ENCODE measurements at regions of chr11 and their contacts with region 1.

Region 1: DNA sequence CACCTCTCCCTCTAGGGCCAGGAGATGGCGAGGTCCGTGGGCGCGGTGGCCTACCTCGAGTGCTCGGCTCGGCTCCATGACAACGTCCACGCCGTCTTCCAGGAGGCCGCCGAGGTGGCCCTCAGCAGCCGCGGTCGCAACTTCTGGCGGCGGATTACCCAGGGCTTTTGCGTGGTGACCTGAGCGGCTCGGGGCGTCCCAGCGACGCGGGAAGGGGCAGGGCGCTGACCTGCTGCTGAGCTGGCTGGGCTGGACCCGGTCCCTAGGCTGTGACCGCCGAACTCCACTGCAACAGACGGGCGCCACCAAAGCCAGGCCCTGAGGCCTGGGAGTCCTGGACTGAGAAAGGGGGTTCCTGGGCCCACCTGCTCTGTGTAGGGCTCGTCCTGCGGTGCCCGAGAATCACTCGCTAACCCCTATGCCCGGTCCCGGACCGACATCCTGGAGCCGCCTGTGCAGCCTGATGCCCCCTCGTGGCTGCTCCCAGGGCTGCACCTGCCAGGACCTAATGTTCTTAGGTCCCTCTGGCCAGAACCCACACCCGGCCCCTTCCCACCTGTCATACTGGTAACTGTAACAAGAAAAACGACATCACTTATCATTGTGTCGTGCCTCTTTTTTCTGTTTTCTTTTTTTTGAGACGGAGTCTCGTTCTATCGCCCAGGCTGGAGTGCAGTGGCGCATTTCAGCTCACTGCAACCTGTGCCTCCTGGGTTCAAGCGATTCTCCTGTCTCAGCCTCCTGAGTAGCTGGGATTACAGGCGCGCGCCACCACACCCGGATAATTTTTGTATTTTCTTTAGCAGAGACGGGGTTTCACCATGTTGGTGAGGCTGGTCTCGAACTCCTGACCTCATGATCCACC is 15.0 kb downstream of the RHOD start:
- DNase-seq: peak; percentile 67 to 85 (median 81)
- H3K4me3 ChIP-seq: peak overlapping the region in 5 of 7 experiments; percentile 8 to 70 (median 51)
- H3K27ac ChIP-seq: no peak overlapping the region
- H3K4me1 ChIP-seq: peaks cover 0 to 6% (median 3%) of the 10 kb centered on the region in 4 experiments
- H3K27me3 ChIP-seq: peaks cover 0 to 16% (median 2%) of the 10 kb centered on the region in 5 experiments

Region 2: DNA sequence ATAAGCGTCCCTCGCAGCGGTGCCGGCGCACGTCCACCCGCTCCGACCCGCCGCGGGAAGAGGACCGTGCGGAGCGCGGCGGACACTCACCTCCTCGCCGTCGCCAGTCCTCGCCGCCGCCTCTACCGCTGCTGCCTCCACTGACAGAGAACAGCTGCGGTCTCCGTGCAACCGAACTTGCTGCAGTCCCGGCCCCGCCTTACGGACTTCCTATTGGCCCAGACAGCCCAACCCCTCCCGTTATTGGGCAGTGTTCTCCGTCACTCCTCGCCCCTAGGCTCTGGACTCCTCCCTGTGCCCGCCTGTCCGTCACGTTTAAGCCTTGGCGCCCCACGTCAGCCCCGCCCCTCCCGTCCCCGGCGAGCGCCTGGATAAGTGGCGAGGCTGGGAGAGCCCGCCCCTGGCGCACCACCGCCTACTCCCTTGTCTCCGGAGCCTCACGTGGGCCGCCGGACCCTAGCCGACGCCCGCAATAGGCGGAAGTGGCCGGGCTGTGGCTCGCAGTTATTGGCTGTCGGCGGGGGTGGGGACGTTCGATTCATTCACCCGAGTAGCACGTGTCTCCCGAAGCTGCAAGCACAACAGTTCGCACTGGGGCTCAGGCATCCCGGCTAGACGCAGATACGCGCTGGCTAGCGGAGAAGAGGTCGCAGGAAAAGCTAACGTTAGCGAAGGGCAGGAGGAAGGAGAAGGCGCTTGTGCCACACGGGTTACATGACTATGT is 113.3 kb before region 1 on chr11 and contains the start of gene PC:
- CTCF ChIA-PET with region 1: no interaction called
- POLR2A ChIA-PET with region 1: interaction called, 10 read pairs
- DNase-seq: peak; percentile 98 to 99 (median 99)
- H3K4me3 ChIP-seq: peak within 1 kb of the TSS; percentile 23 to 78 (median 61)
- H3K27ac ChIP-seq: no peak within 1 kb of the TSS
- H3K4me1 ChIP-seq: peaks cover 0 to 22% (median 22%) of the 10 kb centered on the region in 4 experiments
- H3K27me3 ChIP-seq: peaks cover 0 to 9% (median 4%) of the 10 kb centered on the region in 5 experiments

Region 3: DNA sequence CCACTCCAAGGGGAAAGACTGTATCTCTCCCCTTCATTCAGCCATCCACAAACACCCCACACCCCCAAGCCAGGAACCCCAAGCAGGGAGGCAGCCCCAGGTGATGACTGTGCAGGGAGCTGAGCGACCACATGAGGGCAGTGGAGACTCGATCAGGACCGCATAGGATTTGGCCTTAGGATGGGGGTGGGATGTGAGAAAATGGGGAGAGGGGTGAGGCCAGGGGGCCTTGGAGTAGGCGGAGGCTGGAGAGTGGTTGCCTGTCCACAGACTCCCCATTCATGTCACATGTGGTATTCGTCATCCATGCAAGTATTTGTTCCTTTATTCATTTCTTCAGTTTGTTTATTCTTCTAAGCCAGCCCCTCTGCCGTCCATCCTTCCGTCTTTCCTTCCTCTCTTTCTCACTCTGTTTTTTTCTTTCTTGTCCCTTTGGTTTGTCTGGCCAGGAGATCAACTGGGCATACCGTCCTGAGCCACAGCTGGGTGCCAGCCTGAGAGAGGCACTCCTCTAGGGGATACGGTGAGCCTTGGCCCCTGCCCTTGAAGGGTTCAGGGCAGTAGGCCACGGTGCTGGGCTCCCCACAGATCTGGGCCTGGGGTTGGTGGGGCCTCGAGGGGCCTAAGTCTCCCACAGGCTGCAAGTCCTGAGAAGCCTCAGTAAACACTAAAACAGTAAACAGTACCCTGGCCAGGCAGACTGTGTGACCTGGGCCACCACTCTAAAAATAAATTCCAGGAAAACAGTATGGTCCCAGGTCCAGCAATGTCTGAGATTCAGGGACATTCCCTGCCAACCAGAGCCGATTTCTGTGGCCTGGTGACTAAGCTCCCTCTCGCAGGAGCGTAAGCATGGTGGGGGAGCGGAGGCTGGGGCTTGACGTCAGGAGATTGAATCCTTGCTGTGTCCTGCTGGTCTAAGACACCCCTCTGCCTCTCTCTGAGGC is 17.5 kb before region 1 on chr11:
- CTCF ChIA-PET with region 1: interaction called, 110 read pairs
- POLR2A ChIA-PET with region 1: no interaction called
- DNase-seq: peak; percentile 46 to 70 (median 65)
- H3K4me3 ChIP-seq: no peak overlapping the region
- H3K27ac ChIP-seq: no peak overlapping the region
- H3K4me1 ChIP-seq: peaks cover 0 to 16% (median 13%) of the 10 kb centered on the region in 4 experiments
- H3K27me3 ChIP-seq: peaks cover 0 to 48% (median 21%) of the 10 kb centered on the region in 5 experiments

Measured in common myeloid progenitor, CD34-positive (primary cell).